Common myeloid progenitor, CD34-positive (primary cell): ENCODE measurements at regions of chr5 and their contacts with region 1.

Region 1: DNA sequence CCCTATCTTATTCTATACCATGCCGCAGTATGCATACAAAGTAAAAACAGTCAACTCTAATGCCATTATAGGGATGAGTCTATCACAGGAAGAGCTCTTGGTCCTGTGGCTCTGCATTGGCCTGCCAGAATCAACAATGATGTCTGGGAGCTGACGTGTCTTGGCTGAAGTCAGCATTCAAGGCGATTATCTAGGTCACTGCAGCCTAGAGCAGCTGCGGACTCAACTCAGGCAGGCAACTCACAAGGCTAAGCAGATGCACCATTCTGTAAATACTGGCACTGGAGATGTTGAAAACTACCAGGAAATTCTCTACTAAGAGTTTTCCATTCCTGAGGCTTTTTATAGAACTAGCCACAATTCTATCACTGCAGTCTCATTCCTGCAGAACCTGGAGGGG is 13.3 kb downstream of the SPATA9 start:
- DNase-seq: no peak
- H3K4me3 ChIP-seq: no peak overlapping the region
- H3K27ac ChIP-seq: no peak overlapping the region
- H3K4me1 ChIP-seq: peaks cover 0 to 32% (median 18%) of the 10 kb centered on the region in 4 experiments
- H3K27me3 ChIP-seq: no peaks in the 10 kb centered on the region

Region 2: GRCh38 chr5:95613514-95613913 is 56.0 kb before region 1 on chr5:
- CTCF ChIA-PET with region 1: no interaction called
- POLR2A ChIA-PET with region 1: no interaction called
- DNase-seq: peak in 1 of 3 donors; percentile 7
- H3K4me3 ChIP-seq: no peak overlapping the region
- H3K27ac ChIP-seq: no peak overlapping the region
- H3K4me1 ChIP-seq: no peaks in the 10 kb centered on the region
- H3K27me3 ChIP-seq: no peaks in the 10 kb centered on the region

Region 3: DNA sequence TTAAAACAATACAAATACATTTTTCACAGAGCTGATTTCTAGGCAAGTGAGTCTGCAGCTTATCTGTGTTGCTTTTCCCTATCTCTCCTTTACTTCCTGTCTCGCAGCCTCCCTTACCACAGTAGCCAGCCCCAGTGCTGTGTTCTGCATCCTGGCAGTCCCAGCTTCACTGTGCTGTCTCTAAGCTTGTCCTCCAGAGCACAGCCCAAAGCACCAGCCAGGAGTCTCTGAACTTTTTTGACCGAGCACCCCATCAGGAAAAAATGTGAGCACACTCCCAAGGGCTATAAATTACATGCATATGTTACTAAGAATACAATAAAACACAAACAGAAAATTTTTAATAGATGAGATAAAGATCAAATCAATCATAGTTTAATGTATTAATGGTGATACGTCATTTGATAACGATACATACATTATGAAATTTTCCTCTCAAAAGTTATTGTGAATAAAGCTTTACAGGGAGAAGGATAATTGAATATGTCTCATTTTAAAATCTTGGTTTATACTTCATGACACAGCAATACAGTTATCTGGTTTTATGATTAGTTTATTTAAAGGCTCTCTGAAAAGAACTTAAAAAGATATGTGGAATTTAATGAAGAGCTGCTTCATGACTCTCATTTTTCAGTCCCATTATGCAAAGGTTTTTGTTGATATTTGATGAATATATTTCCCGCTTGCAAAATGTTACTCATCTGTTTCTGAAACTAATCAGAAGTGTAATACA is 54.3 kb after region 1 on chr5:
- CTCF ChIA-PET with region 1: interaction called, 10 read pairs
- POLR2A ChIA-PET with region 1: no interaction called
- DNase-seq: no peak
- H3K4me3 ChIP-seq: peak overlapping the region in 2 of 7 experiments; percentile 35 to 37
- H3K27ac ChIP-seq: peak overlapping the region in 1 of 2 experiments; percentile 15
- H3K4me1 ChIP-seq: peaks cover 11 to 41% (median 27%) of the 10 kb centered on the region in 4 experiments
- H3K27me3 ChIP-seq: no peaks in the 10 kb centered on the region